Gastrocnemius medialis (tissue), 4 donors: ENCODE measurements at regions of chr15 and their contacts with region 1.

Region 1: GRCh38 chr15:60592371-60593169 is 113.6 kb upstream of the ICE2 start:
- DNase-seq: peak; percentile 89 to 91
- ATAC-seq: peak; percentile 83 to 84
- H3K4me3 ChIP-seq: peak overlapping the region; percentile 75 to 83 (median 76)
- H3K27ac ChIP-seq: peak overlapping the region; percentile 86 to 98 (median 97)
- H3K4me1 ChIP-seq: peaks cover 32 to 44% of the 10 kb centered on the region in 2 donors
- H3K27me3 ChIP-seq: no peaks in the 10 kb centered on the region
- CTCF ChIP-seq: peak in 4 of 5 experiments; percentile 16 to 17 (median 16)
- POLR2A ChIP-seq: peak; percentile 90 to 95

Region 2: DNA sequence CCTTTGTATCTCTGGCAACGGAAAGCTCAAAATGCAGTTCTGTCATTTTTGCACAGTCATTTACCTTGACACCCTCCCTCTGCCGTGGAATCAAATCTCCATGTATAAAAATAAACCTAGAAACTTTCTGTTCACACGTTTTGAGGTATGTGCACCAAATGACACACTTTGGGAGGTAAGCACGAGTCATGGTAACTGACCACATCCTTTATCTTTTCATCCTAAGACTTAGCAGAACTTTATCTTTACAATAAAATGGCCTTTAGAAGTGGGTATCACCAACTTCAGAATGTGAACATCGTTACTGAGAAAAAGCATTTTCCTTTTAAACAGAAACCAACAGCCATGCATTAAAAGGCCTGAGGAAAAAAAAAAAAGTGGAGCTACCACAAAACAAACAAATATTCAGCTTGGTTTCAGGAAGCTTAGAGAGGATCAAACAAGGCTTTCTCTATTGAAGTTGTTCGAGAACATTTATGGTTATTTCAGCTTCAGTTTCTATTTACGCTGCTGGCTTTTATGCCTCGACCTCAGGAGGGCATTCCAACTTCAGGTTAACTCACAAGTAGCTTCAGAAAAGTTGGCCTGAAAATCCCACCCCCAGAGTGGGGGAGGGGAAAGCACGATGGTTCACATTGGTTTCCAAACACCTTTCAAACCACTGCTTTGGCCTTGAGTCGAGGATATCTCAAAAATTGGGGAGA is 57.4 kb after region 1 on chr15:
- in situ Hi-C with region 1: no loop called
- intact Hi-C with region 1: loop called (anchors 2 kb)
- DNase-seq: peak in 1 of 2 donors; percentile 22
- ATAC-seq: peak in 1 of 2 donors; percentile 17
- H3K4me3 ChIP-seq: peak overlapping the region in 3 of 4 donors; percentile 3 to 16 (median 8)
- H3K27ac ChIP-seq: peak overlapping the region; percentile 82 to 87 (median 83)
- H3K4me1 ChIP-seq: peaks cover 58 to 59% of the 10 kb centered on the region in 2 donors
- H3K27me3 ChIP-seq: no peaks in the 10 kb centered on the region
- CTCF ChIP-seq: no peak
- POLR2A ChIP-seq: no peak

Region 3: DNA sequence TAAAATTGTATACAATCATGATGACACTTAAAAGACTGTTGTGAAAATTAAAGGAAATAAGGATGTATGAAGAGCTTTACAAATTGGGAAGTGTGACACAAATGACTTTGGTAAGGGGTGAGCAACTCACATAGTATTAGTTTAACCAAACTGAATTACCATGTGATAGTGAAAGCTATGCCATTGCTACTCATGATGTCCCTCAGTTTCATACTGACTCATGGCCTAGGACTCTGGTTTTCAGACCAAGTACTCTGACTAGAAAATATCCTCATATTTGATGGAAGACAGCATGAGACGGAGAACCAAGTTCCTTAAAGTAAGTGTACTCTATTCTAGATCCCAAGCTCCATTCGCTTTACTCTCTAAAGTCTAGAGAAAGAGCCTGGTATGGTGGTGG is 89.5 kb after region 1 on chr15:
- in situ Hi-C with region 1: no loop called
- intact Hi-C with region 1: loop called (anchors 2 kb)
- DNase-seq: no peak
- ATAC-seq: peak; percentile 49 to 61
- H3K4me3 ChIP-seq: no peak overlapping the region
- H3K27ac ChIP-seq: peak overlapping the region; percentile 82 to 90 (median 84)
- H3K4me1 ChIP-seq: peaks cover 32 to 48% of the 10 kb centered on the region in 2 donors
- H3K27me3 ChIP-seq: no peaks in the 10 kb centered on the region
- CTCF ChIP-seq: no peak
- POLR2A ChIP-seq: no peak

Region 4: GRCh38 chr15:60751985-60752952 is 159.7 kb after region 1 on chr15:
- in situ Hi-C with region 1: no loop called
- intact Hi-C with region 1: loop called (anchors 5 kb)
- DNase-seq: peak; percentile 22 to 61
- ATAC-seq: peak; percentile 73 to 91
- H3K4me3 ChIP-seq: peak overlapping the region; percentile 45 to 47 (median 46)
- H3K27ac ChIP-seq: peak overlapping the region; percentile 77 to 88 (median 80)
- H3K4me1 ChIP-seq: peaks cover 20 to 24% of the 10 kb centered on the region in 2 donors
- H3K27me3 ChIP-seq: no peaks in the 10 kb centered on the region
- CTCF ChIP-seq: no peak
- POLR2A ChIP-seq: no peak

Region 5: DNA sequence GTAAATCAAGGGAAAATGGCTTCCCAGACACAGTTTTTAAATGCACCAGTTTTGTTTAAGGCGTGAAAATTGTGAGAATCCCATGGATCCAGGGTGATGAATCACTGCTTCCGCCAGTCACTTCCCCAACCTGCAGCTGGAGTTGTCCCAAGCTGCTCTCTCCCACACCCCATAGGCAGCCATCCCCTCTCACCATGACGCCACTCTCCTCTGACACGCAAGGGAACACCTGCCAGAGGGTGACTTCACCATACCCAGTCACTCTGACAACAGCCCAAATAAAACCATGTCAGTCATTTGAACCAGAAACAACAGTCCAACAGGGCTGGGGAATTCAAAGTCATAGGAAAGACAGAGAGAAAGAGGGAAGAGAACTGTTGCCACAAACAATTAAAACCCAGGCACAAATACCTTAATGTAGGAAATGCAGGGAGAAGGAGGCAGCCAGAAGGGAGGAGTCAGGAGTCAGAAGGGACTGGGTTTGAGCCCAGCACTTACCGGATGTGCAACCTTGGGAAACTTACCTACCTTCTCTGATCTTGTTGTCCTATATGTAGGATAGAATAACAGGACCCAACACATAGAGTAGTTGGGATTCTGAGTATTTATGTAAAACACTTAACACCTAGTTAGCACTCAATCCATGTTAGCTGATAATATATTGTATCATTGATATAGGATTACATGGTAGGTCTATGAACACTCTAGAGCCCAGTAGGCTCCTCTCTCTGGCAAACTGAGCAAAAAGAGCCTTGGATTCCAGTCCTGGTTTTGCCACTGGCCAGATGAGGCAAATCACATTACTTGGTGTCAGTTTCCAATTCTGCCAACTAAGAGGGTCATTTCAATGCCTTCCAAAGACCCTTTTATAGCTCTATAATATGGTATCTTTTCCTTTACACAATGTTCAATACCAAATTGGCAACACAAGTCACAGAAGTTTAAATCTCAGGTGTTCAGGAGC is 212.7 kb after region 1 on chr15:
- in situ Hi-C with region 1: no loop called
- intact Hi-C with region 1: loop called (anchors 5 kb)
- DNase-seq: peak in 1 of 2 donors; percentile 38
- ATAC-seq: peak in 1 of 2 donors; percentile 17
- H3K4me3 ChIP-seq: no peak overlapping the region
- H3K27ac ChIP-seq: no peak overlapping the region
- H3K4me1 ChIP-seq: peaks cover 23 to 27% of the 10 kb centered on the region in 2 donors
- H3K27me3 ChIP-seq: no peaks in the 10 kb centered on the region
- CTCF ChIP-seq: no peak
- POLR2A ChIP-seq: no peak

Region 6: GRCh38 chr15:60932051-60932915 is 339.7 kb after region 1 on chr15:
- in situ Hi-C with region 1: no loop called
- intact Hi-C with region 1: loop called (anchors 5 kb)
- DNase-seq: peak; percentile 89 to 96
- ATAC-seq: peak; percentile 76 to 94
- H3K4me3 ChIP-seq: no peak overlapping the region
- H3K27ac ChIP-seq: peak overlapping the region; percentile 54 to 83 (median 65)
- H3K4me1 ChIP-seq: peaks cover 52 to 74% of the 10 kb centered on the region in 2 donors
- H3K27me3 ChIP-seq: no peaks in the 10 kb centered on the region
- CTCF ChIP-seq: peak; percentile 28 to 68 (median 62)
- POLR2A ChIP-seq: no peak